GM12878 (cell line): ENCODE measurements at regions of chr17 and their contacts with region 1.

Region 1: DNA sequence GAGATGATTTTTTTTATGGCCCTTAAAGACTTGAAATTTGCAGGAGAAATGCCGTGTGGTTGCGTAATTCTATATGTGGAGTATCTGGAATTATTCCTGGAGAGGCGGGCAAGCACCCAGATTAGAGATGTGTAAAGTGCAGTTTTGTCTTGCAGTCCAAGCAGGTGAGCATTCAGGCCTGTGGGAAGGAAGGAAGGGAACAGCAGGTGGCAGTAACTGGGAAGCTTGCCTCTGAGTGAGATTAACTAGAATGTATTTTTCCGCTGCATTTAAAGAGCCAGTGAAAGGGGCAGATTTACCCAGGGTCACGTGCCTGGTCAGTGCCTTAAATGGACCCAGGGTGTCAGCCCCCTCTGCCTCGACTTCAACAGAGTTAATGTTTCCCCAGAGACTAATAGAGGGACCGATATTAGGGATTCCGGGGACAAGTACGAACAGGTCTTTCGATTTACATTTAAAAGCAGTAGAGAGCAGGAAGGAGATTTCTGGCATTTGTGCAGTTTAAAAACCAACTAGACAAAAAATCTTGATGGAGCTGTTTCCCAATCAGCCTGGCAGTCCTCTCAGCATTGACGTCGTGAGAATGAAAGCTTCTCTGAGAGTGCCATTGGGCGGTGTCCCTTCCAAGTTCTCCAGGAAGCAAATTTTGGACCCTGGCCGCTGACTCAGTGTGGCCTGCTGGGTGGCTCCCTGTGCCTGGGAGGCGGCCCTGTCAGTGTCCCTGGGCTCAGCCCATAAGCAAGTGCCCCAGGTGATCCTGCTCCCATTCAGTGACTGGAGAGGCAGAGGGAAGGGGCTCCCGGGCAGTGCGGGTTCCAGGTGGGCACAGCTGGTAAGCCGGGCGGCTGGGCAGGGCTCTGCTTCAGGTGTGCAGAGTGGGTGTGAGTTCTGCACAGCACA is 38.2 kb downstream of the KSR1 start:
- DNase-seq: no peak
- ATAC-seq: no peak; the same call in 2 of the 3 replicates
- H3K4me3 ChIP-seq: no peak overlapping the region
- H3K27ac ChIP-seq: peak overlapping the region; percentile 80; the same call in 1 of the 2 replicates
- H3K4me1 ChIP-seq: peaks cover 43% of the 10 kb centered on the region
- H3K27me3 ChIP-seq: no peaks in the 10 kb centered on the region
- CTCF ChIP-seq: peak in 1 of 3 experiments; percentile 24; a peak in 2 of 6 replicates
- EP300 ChIP-seq: no peak
- POLR2A ChIP-seq: no peak
- RAD21 ChIP-seq: no peak

Region 2: DNA sequence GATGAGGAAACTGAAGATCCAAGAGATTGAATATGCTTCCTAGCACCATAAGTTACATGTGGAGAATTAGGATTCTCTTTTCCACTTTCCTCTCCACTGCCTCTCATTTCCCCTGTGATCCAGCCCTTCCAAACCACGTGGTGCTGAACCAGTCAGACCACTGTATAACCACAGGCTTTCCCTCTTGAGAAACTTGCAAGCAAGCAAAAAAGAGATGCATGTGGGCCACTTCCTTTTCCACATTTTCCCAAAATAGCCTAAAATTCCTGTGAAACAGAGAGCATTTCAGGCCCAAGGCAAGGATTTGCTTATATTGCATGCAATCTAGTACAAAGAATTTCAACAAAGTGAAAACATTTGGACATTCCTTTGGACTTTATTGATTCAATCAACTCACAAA is 97.5 kb before region 1 on chr17:
- CTCF ChIA-PET with region 1: no interaction called
- POLR2A ChIA-PET with region 1: no interaction called
- RAD21 ChIA-PET with region 1: no interaction called
- SMC1A ChIA-PET with region 1: no interaction called
- in situ Hi-C with region 1: no loop called
- intact Hi-C with region 1: no loop called
- DNase-seq: no peak
- ATAC-seq: no peak
- H3K4me3 ChIP-seq: no peak overlapping the region
- H3K27ac ChIP-seq: no peak overlapping the region
- H3K4me1 ChIP-seq: no peaks in the 10 kb centered on the region
- H3K27me3 ChIP-seq: no peaks in the 10 kb centered on the region; a peak in 1 of 4 replicates
- CTCF ChIP-seq: no peak
- EP300 ChIP-seq: no peak
- POLR2A ChIP-seq: no peak
- RAD21 ChIP-seq: no peak

Region 3: GRCh38 chr17:27430882-27431491 is 63.5 kb before region 1 on chr17:
- CTCF ChIA-PET with region 1: no interaction called
- POLR2A ChIA-PET with region 1: no interaction called
- RAD21 ChIA-PET with region 1: no interaction called
- SMC1A ChIA-PET with region 1: no interaction called
- in situ Hi-C with region 1: no loop called
- intact Hi-C with region 1: no loop called
- DNase-seq: no peak
- ATAC-seq: peak; percentile 76
- H3K4me3 ChIP-seq: no peak overlapping the region
- H3K27ac ChIP-seq: no peak overlapping the region
- H3K4me1 ChIP-seq: no peaks in the 10 kb centered on the region
- H3K27me3 ChIP-seq: no peaks in the 10 kb centered on the region
- CTCF ChIP-seq: peak; percentile 25 to 57 (median 30); a peak in 2 of 6 replicates
- EP300 ChIP-seq: no peak
- POLR2A ChIP-seq: no peak
- RAD21 ChIP-seq: no peak

Region 4: GRCh38 chr17:27461192-27461859 is 33.1 kb before region 1 on chr17:
- CTCF ChIA-PET with region 1: interaction called, 9 read pairs
- POLR2A ChIA-PET with region 1: interaction called, 11 read pairs
- RAD21 ChIA-PET with region 1: interaction called, 17 read pairs
- SMC1A ChIA-PET with region 1: interaction called, 139 read pairs
- in situ Hi-C with region 1: no loop called
- intact Hi-C with region 1: loop called (anchors 5 kb)
- DNase-seq: no peak
- ATAC-seq: peak; percentile 30
- H3K4me3 ChIP-seq: peak overlapping the region; percentile 89; the same call in 1 of the 2 replicates
- H3K27ac ChIP-seq: peak overlapping the region; percentile 62; the same call in 1 of the 2 replicates
- H3K4me1 ChIP-seq: peaks cover 41% of the 10 kb centered on the region
- H3K27me3 ChIP-seq: no peaks in the 10 kb centered on the region
- CTCF ChIP-seq: no peak
- EP300 ChIP-seq: no peak; a peak in 1 of 4 replicates
- POLR2A ChIP-seq: no peak
- RAD21 ChIP-seq: no peak

Region 5: GRCh38 chr17:27473748-27474609 is 20.5 kb before region 1 on chr17:
- CTCF ChIA-PET with region 1: interaction called, 5 read pairs
- POLR2A ChIA-PET with region 1: interaction called, 7 read pairs
- RAD21 ChIA-PET with region 1: interaction called, 20 read pairs
- SMC1A ChIA-PET with region 1: interaction called, 139 read pairs
- in situ Hi-C with region 1: no loop called
- intact Hi-C with region 1: loop called (anchors 2 kb)
- DNase-seq: peak; percentile 97
- ATAC-seq: peak; percentile 35
- H3K4me3 ChIP-seq: peak overlapping the region; percentile 42
- H3K27ac ChIP-seq: peak overlapping the region; percentile 98
- H3K4me1 ChIP-seq: peaks cover 85% of the 10 kb centered on the region
- H3K27me3 ChIP-seq: no peaks in the 10 kb centered on the region
- CTCF ChIP-seq: no peak
- EP300 ChIP-seq: peak; percentile 68 to 81; a peak in 2 of 4 replicates
- POLR2A ChIP-seq: no peak
- RAD21 ChIP-seq: peak; percentile 17; the same call in 1 of the 2 replicates

Region 6: GRCh38 chr17:27506348-27507231 is 12.1 kb after region 1 on chr17:
- CTCF ChIA-PET with region 1: interaction called, 25 read pairs
- POLR2A ChIA-PET with region 1: interaction called, 3 read pairs
- RAD21 ChIA-PET with region 1: interaction called, 13 read pairs
- SMC1A ChIA-PET with region 1: interaction called, 23 read pairs
- in situ Hi-C with region 1: no loop called
- intact Hi-C with region 1: loop called (anchors 1 kb)
- DNase-seq: peak; percentile 70
- ATAC-seq: peak; percentile 82
- H3K4me3 ChIP-seq: peak overlapping the region; percentile 61; the same call in 1 of the 2 replicates
- H3K27ac ChIP-seq: peak overlapping the region; percentile 79
- H3K4me1 ChIP-seq: peaks cover 30% of the 10 kb centered on the region
- H3K27me3 ChIP-seq: no peaks in the 10 kb centered on the region
- CTCF ChIP-seq: no peak
- EP300 ChIP-seq: peak; percentile 67 to 69; a peak in 3 of 4 replicates
- POLR2A ChIP-seq: 0 out of 2 replicates have a peak, but pooled peaks have one; percentile 24
- RAD21 ChIP-seq: 0 out of 2 replicates have a peak, but pooled peaks have one; percentile 13

Region 7: DNA sequence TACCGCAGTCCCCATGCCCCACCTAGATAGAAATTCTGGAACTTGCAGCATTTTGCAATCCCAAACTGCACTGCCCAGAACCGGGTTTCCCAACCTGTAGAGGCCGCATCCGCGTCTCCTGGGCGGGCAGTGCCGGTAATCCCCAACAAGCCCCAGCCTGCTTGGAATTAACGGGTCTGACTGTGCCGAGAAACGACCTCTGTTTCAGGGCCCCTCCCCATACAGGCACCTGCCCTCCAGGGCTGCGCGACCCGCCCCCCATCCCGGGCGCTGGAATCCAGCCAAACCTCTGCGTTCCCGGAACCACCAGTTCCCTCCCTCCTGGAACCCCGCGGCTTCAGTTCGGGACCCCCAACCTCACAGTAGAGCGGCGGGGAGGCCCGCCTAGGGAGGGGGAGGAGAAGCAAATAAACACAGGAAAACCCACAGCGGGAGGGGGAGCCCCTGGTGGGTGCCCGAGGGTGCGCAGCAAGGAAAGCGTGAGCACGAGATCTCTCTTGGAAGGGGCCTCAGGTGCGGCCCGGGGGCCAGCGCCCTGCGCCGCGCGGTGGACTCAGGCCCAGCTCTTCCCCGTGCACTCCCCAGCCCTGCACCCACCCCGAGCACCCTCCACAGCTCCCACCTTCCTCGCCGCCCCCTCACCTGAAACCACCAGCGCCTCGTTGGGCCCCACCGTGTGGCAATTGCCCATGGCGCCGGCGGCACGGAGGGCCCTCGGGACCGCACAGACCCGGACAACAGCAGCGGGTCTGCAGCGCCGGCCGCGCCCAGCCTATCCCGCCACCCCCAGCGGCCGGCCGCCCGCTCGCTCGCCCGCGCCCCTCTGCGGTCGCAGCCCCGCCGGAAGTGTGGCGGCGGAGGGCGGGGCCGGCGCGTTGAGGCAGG is 1402.7 kb after region 1 on chr17 and contains the start of gene FLOT2:
- CTCF ChIA-PET with region 1: no interaction called
- POLR2A ChIA-PET with region 1: no interaction called
- RAD21 ChIA-PET with region 1: no interaction called
- SMC1A ChIA-PET with region 1: no interaction called
- in situ Hi-C with region 1: loop called (anchors 25 kb)
- intact Hi-C with region 1: no loop called
- DNase-seq: no peak
- ATAC-seq: peak; percentile 43
- H3K4me3 ChIP-seq: peak within 1 kb of the TSS; percentile 92
- H3K27ac ChIP-seq: peak within 1 kb of the TSS; percentile 72
- H3K4me1 ChIP-seq: peaks cover 39% of the 10 kb centered on the region
- H3K27me3 ChIP-seq: no peaks in the 10 kb centered on the region
- CTCF ChIP-seq: peak in 2 of 3 experiments; percentile 11 to 17; a peak in 2 of 6 replicates
- EP300 ChIP-seq: no peak
- POLR2A ChIP-seq: peak; percentile 71
- RAD21 ChIP-seq: no peak
- polyA plus RNA-seq, gene FLOT2: 56.8 to 121 TPM